ENCODE measurements at regions of chr12 and their contacts with region 1.

Region 1: GRCh38 chr12:113040722-113041171 is 15.8 kb upstream of the DTX1 start:
- DNase-seq: peak; percentile 65 to 96
- H3K4me3 ChIP-seq: no peak overlapping the region
- H3K27ac ChIP-seq: peak overlapping the region; percentile 78
- H3K4me1 ChIP-seq: peaks cover 20% of the 10 kb centered on the region
- H3K27me3 ChIP-seq: no peaks in the 10 kb centered on the region
- CTCF ChIP-seq: no peak

Region 2: DNA sequence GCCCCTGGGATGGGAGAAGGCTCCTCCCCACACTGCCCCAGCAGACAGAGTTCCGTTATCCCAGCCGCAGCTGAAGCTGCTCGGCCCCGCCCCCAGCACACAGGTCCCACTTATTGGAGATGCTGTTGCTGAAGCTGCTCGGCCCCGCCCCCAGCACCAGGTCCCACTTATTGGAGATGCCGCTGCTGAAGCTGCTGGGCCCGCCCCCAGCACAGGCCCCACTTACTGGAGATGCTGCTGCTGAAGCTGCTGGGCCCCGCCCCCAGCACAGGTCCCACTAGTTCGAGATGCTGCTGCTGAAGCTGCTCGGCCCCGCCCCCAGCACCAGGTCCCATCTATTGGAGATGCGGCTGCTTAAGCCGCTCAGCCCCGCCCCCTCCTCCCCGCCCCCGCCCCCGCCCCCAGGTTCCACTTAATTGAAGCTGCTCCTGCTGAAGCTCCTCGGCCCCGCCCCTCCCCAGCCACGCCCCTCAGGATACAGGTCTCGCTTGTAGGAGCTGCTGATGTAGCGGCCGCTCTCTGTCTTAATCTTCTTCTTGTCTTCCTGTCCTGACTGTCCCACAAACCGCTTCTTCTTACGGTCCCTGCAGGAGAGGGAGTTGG is 120.8 kb after region 1 on chr12:
- CTCF ChIA-PET with region 1: interaction called, 28 read pairs
- POLR2A ChIA-PET with region 1: no interaction called
- intact Hi-C with region 1: no loop called
- DNase-seq: peak in 1 of 2 experiments; percentile 44
- H3K4me3 ChIP-seq: no peak overlapping the region
- H3K27ac ChIP-seq: no peak overlapping the region
- H3K4me1 ChIP-seq: no peaks in the 10 kb centered on the region
- H3K27me3 ChIP-seq: no peaks in the 10 kb centered on the region
- CTCF ChIP-seq: no peak

Measured in PC-9 (cell line).